Ovary (tissue), 10 donors: ENCODE measurements at regions of chr12 and their contacts with region 1.

Region 1: GRCh38 chr12:130335517-130336392 is 1.9 kb upstream of the PIWIL1 start:
- DNase-seq: peak in 1 of 5 donors; percentile 38
- H3K4me3 ChIP-seq: no peak overlapping the region
- H3K27ac ChIP-seq: no peak overlapping the region
- H3K4me1 ChIP-seq: peaks cover 6% of the 10 kb centered on the region
- H3K27me3 ChIP-seq: no peaks in the 10 kb centered on the region
- CTCF ChIP-seq: peak in 2 of 3 donors; percentile 40 to 59
- EP300 ChIP-seq: no peak
- POLR2A ChIP-seq: no peak

Region 2: GRCh38 chr12:129257524-129257923 is 1078.2 kb before region 1 on chr12:
- intact Hi-C with region 1: no loop called
- DNase-seq: no peak
- H3K4me3 ChIP-seq: no peak overlapping the region
- H3K27ac ChIP-seq: no peak overlapping the region
- H3K4me1 ChIP-seq: no peaks in the 10 kb centered on the region
- H3K27me3 ChIP-seq: no peaks in the 10 kb centered on the region
- CTCF ChIP-seq: no peak
- EP300 ChIP-seq: no peak
- POLR2A ChIP-seq: no peak

Region 3: GRCh38 chr12:129877411-129877810 is 458.3 kb before region 1 on chr12:
- intact Hi-C with region 1: no loop called
- DNase-seq: no peak
- H3K4me3 ChIP-seq: no peak overlapping the region
- H3K27ac ChIP-seq: no peak overlapping the region
- H3K4me1 ChIP-seq: no peaks in the 10 kb centered on the region
- H3K27me3 ChIP-seq: no peaks in the 10 kb centered on the region
- CTCF ChIP-seq: no peak
- EP300 ChIP-seq: no peak
- POLR2A ChIP-seq: no peak

Region 4: DNA sequence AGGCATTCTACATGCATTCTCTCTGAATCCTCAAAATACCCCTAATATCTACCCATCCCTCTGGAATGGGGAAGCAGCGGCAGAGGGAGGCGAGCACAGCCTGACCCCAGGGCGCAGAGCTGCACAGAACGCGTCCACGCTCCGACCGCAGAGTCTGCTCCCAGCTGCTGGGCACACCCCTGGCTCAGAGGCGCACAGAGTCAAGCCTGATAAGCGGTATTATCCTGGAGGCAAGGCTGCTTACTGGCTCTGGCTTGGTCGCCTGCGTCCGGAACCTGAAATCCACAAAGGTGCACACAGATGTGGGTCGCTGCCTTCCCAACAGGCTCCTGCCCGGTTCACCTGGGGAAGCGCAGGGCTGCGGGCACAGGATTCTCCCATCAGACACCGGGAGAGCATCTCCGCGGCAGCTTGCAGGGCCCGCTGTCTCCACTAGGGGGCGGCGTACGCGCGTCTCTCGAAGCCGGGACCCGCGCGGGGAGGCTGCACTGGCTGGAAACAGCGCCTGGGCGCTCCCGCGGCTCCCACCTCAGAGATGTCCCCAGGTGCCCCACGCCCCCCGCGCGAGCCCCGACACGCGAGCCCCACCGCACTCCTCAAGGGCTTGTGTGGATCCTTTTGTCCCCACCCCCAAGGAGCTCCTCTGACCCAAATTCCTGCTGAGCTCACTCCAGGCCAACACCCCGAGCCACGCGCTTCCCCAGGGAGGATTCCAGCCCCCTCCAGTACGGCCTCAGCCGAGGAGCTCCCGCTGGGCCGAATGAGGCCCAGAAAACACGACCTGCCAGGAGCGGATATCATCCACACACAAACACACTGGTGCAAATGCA is 293.6 kb before region 1 on chr12:
- intact Hi-C with region 1: loop called (anchors 5 to 10 kb)
- DNase-seq: peak in 4 of 5 donors; percentile 21 to 60 (median 28)
- H3K4me3 ChIP-seq: no peak overlapping the region
- H3K27ac ChIP-seq: no peak overlapping the region
- H3K4me1 ChIP-seq: no peaks in the 10 kb centered on the region
- H3K27me3 ChIP-seq: no peaks in the 10 kb centered on the region
- CTCF ChIP-seq: peak in 1 of 3 donors; percentile 47
- EP300 ChIP-seq: no peak
- POLR2A ChIP-seq: no peak

Region 5: GRCh38 chr12:130362060-130362459 is 26.3 kb after region 1 on chr12:
- intact Hi-C with region 1: loop called in 1 of 4 experiments (anchors 2 kb)
- DNase-seq: no peak
- H3K4me3 ChIP-seq: no peak overlapping the region
- H3K27ac ChIP-seq: no peak overlapping the region
- H3K4me1 ChIP-seq: no peaks in the 10 kb centered on the region
- H3K27me3 ChIP-seq: no peaks in the 10 kb centered on the region
- CTCF ChIP-seq: no peak
- EP300 ChIP-seq: no peak
- POLR2A ChIP-seq: no peak

Region 6: GRCh38 chr12:130418251-130418650 is 82.5 kb after region 1 on chr12:
- intact Hi-C with region 1: no loop called
- DNase-seq: no peak
- H3K4me3 ChIP-seq: no peak overlapping the region
- H3K27ac ChIP-seq: no peak overlapping the region
- H3K4me1 ChIP-seq: no peaks in the 10 kb centered on the region
- H3K27me3 ChIP-seq: no peaks in the 10 kb centered on the region
- CTCF ChIP-seq: no peak
- EP300 ChIP-seq: no peak
- POLR2A ChIP-seq: no peak

Region 7: DNA sequence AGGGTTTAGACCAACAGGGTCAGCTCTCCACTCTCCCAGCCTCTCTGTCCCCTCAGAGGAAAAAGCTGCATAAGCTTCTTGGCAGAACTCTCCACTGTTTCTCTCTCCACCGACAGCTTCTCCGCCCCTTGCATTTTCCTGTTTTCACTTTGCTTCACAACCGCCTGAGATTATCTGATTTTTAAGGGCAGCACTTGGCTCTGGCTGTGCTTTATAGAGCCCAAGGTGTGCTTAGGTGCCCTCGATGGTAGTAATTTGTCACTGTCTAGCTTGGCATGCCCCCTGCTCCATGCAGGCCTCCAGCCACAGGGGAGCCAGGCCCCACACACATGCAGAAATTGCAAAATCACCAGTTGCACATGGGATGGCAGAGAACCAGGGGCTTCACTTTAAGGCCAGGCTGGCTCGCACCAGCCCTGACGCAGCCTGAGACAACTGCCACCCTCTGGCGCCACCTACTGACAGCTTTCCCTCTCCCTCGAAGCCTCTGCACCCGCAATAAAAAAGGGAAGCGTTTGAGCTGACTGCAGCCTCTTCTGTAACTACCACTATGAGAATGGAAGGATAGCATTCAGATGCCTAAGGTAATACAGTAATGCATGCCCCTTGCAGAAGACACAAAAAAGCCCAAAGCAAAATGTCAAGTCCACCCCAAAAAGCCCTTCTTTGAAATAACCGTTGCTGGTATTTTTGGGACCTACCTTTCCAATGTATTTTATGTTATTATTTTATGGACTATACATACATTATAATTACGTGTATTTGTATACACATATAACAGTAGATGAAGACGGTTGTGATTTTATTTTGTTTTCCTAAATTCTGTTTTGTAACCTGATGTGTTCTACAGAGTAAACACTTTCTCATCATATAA is 412.3 kb after region 1 on chr12:
- intact Hi-C with region 1: loop called in 1 of 4 experiments (anchors 10 kb)
- DNase-seq: peak; percentile 67 to 89 (median 78)
- H3K4me3 ChIP-seq: no peak overlapping the region
- H3K27ac ChIP-seq: no peak overlapping the region
- H3K4me1 ChIP-seq: peaks cover 2% of the 10 kb centered on the region
- H3K27me3 ChIP-seq: no peaks in the 10 kb centered on the region
- CTCF ChIP-seq: peak; percentile 31 to 53 (median 45)
- EP300 ChIP-seq: no peak
- POLR2A ChIP-seq: no peak